ENCODE measurements at regions of chr6 and their contacts with region 1.

Region 1: GRCh38 chr6:119742188-119742803 is 392.7 kb upstream of the MAN1A1 start:
- DNase-seq: peak; percentile 33
- H3K4me3 ChIP-seq: no peak overlapping the region
- H3K27ac ChIP-seq: no peak overlapping the region
- H3K4me1 ChIP-seq: no peaks in the 10 kb centered on the region
- H3K27me3 ChIP-seq: peaks cover 2% of the 10 kb centered on the region
- CTCF ChIP-seq: peak; percentile 81 to 96

Region 2: GRCh38 chr6:119129148-119129967 is 612.9 kb before region 1 on chr6:
- CTCF ChIA-PET with region 1: no interaction called
- dilution Hi-C with region 1: no loop called
- in situ Hi-C with region 1: loop called in 1 of 2 experiments (anchors 25 kb)
- intact Hi-C with region 1: no loop called
- DNase-seq: peak; percentile 53
- H3K4me3 ChIP-seq: no peak overlapping the region
- H3K27ac ChIP-seq: peak overlapping the region; percentile 58
- H3K4me1 ChIP-seq: peaks cover 12% of the 10 kb centered on the region
- H3K27me3 ChIP-seq: no peaks in the 10 kb centered on the region
- CTCF ChIP-seq: peak; percentile 86 to 93

Region 3: GRCh38 chr6:119961450-119961849 is 219.2 kb after region 1 on chr6:
- CTCF ChIA-PET with region 1: interaction called, 10 read pairs
- dilution Hi-C with region 1: no loop called
- in situ Hi-C with region 1: no loop called
- intact Hi-C with region 1: no loop called
- DNase-seq: no peak
- H3K4me3 ChIP-seq: no peak overlapping the region
- H3K27ac ChIP-seq: no peak overlapping the region
- H3K4me1 ChIP-seq: no peaks in the 10 kb centered on the region
- H3K27me3 ChIP-seq: no peaks in the 10 kb centered on the region
- CTCF ChIP-seq: no peak

Region 4: DNA sequence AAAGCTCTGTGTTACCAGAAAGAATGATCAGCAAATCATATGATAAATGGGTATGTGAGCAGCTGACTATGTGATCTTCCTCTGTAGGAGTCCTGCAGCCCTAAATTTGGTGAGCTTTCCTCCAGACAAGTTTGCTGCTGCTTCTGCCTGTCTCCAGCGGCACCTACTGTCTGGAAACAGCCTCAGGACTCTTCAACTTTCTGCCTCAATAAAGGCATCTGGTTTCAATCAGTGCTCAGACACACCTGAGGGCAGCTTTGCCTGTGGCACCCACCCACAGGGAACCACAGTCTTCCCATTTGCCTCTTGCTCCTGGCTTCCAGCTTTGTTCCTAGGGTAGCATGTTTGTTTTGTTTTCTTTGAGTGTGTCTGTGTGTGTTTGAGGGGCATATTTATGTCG is 335.2 kb after region 1 on chr6:
- CTCF ChIA-PET with region 1: no interaction called
- dilution Hi-C with region 1: no loop called
- in situ Hi-C with region 1: loop called in 1 of 2 experiments (anchors 25 kb)
- intact Hi-C with region 1: loop called (anchors 1 kb)
- DNase-seq: peak; percentile 8
- H3K4me3 ChIP-seq: no peak overlapping the region
- H3K27ac ChIP-seq: no peak overlapping the region
- H3K4me1 ChIP-seq: no peaks in the 10 kb centered on the region
- H3K27me3 ChIP-seq: no peaks in the 10 kb centered on the region
- CTCF ChIP-seq: peak; percentile 34 to 69

Region 5: DNA sequence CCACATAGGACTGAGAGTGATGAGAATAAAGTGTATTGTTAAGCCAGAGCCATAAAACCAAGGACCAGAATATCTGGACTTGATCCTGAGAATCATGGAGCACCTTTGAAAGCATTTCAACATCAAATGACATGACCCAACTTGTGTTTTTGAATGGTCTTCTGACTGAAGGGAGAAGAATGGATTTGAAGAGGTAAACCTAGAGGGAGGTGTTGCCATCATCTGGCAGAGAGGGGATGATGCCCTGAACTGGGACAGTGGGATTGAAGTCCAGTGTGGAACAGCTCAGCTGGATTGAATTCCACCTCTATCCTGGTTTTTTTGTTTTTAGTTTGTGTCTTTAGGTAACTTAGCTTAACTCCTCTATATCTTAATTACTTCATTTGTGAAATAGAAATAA is 1022.0 kb after region 1 on chr6:
- CTCF ChIA-PET with region 1: no interaction called
- dilution Hi-C with region 1: no loop called
- in situ Hi-C with region 1: no loop called
- intact Hi-C with region 1: loop called (anchors 10 kb)
- DNase-seq: peak; percentile 26
- H3K4me3 ChIP-seq: no peak overlapping the region
- H3K27ac ChIP-seq: no peak overlapping the region
- H3K4me1 ChIP-seq: no peaks in the 10 kb centered on the region
- H3K27me3 ChIP-seq: peaks cover 2% of the 10 kb centered on the region
- CTCF ChIP-seq: peak; percentile 34 to 74

Region 6: DNA sequence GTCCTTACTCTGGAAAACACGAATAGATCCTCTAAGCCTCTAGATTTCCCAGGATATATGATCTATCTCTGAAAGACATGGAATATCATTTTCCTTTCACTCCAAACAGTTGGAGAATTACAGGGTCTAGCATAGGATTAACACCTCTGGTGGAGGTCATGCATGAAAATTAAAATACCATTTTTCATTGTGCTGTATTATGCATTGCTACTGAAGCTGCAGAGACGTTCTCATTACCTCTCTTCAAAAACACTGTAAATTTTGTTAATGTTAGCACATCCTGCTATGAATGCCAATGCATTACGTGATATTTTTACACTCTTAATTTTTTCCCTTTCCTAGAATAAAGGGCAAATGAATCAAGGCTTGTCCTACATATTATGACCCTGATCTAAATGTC is 1033.4 kb after region 1 on chr6:
- CTCF ChIA-PET with region 1: no interaction called
- dilution Hi-C with region 1: no loop called
- in situ Hi-C with region 1: no loop called
- intact Hi-C with region 1: no loop called
- DNase-seq: no peak
- H3K4me3 ChIP-seq: no peak overlapping the region
- H3K27ac ChIP-seq: no peak overlapping the region
- H3K4me1 ChIP-seq: no peaks in the 10 kb centered on the region
- H3K27me3 ChIP-seq: no peaks in the 10 kb centered on the region
- CTCF ChIP-seq: no peak